ENCODE measurements at regions of chr6 and their contacts with region 1.

Region 1: GRCh38 chr6:42294759-42295158 is 77.1 kb upstream of the MRPS10 start:
- DNase-seq: peak; percentile 97
- ATAC-seq: peak; percentile 93
- H3K4me3 ChIP-seq: no peak overlapping the region
- H3K27ac ChIP-seq: peak overlapping the region; percentile 96
- H3K4me1 ChIP-seq: peaks cover 65% of the 10 kb centered on the region
- H3K27me3 ChIP-seq: no peaks in the 10 kb centered on the region
- CTCF ChIP-seq: no peak

Region 2: GRCh38 chr6:42338663-42339218 is 44.0 kb after region 1 on chr6:
- CTCF ChIA-PET with region 1: no interaction called
- POLR2A ChIA-PET with region 1: no interaction called
- intact Hi-C with region 1: loop called (anchors 1 kb)
- DNase-seq: peak; percentile 98
- ATAC-seq: peak; percentile 93
- H3K4me3 ChIP-seq: peak overlapping the region; percentile 12; the same call in 1 of the 2 replicates
- H3K27ac ChIP-seq: peak overlapping the region; percentile 94
- H3K4me1 ChIP-seq: peaks cover 33% of the 10 kb centered on the region
- H3K27me3 ChIP-seq: no peaks in the 10 kb centered on the region
- CTCF ChIP-seq: no peak

Region 3: GRCh38 chr6:42402184-42402583 is 107.4 kb after region 1 on chr6:
- CTCF ChIA-PET with region 1: no interaction called
- POLR2A ChIA-PET with region 1: interaction called, 19 read pairs
- intact Hi-C with region 1: no loop called
- DNase-seq: peak; percentile 46
- ATAC-seq: no peak; the same call in 1 of the 2 replicates
- H3K4me3 ChIP-seq: no peak overlapping the region
- H3K27ac ChIP-seq: no peak overlapping the region
- H3K4me1 ChIP-seq: peaks cover 47% of the 10 kb centered on the region
- H3K27me3 ChIP-seq: no peaks in the 10 kb centered on the region
- CTCF ChIP-seq: no peak

Measured in PC-3 (cell line).